WTC11 (cell line): ENCODE measurements at regions of chr3 and their contacts with region 1.

Region 1: DNA sequence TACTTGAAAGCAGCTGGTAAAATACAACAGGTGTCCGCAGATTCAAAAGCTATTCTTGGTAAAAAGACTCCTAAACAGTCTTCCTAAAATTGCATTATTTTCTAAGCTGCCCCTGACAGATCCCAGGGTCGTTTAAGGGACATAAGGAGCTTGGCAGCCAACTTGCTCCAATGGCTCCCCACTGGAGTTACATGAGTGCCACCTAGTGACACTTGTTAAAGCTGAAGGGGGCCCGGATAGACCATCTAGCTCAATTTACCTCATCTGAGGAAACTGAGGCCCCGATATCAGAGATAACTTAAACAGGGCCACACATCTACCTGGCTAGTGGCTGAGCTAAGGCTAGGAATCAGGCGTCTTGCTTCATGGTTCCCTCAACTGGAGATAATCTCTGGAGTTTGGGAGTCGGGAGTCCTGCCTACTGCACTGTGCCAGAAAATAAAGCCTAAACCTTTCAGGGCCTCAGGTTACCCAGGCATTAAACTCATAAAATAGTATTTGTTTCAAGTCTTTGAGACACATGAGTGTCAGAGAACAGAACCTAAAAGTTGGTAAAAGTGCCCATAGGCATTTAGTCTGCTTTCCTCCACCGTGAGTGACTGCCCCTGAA is 6.5 kb upstream of the TBC1D23 start:
- DNase-seq: peak; percentile 67
- ATAC-seq: peak; percentile 98
- H3K4me3 Mint-ChIP-seq: no peak overlapping the region
- H3K27ac Mint-ChIP-seq: no peak overlapping the region
- H3K4me1 Mint-ChIP-seq: peaks cover 2% of the 10 kb centered on the region
- H3K27me3 Mint-ChIP-seq: 0 out of 2 replicates have a peak, but pooled peaks cover 2% of the 10 kb centered on the region
- CTCF ChIP-seq: peak; percentile 40; the same call in 1 of the 2 replicates

Region 2: GRCh38 chr3:99833617-99834205 is 420.6 kb before region 1 on chr3:
- CTCF ChIA-PET with region 1: interaction called, 75 read pairs
- POLR2A ChIA-PET with region 1: no interaction called
- DNase-seq: no peak
- ATAC-seq: no peak
- H3K4me3 Mint-ChIP-seq: no peak overlapping the region
- H3K27ac Mint-ChIP-seq: no peak overlapping the region
- H3K4me1 Mint-ChIP-seq: peaks cover 8% of the 10 kb centered on the region
- H3K27me3 Mint-ChIP-seq: no peaks in the 10 kb centered on the region
- CTCF ChIP-seq: no peak

Region 3: GRCh38 chr3:99842826-99843589 is 411.3 kb before region 1 on chr3:
- CTCF ChIA-PET with region 1: interaction called, 57 read pairs
- POLR2A ChIA-PET with region 1: interaction called, 5 read pairs
- DNase-seq: no peak
- ATAC-seq: peak; percentile 79
- H3K4me3 Mint-ChIP-seq: no peak overlapping the region
- H3K27ac Mint-ChIP-seq: no peak overlapping the region
- H3K4me1 Mint-ChIP-seq: peaks cover 31% of the 10 kb centered on the region
- H3K27me3 Mint-ChIP-seq: no peaks in the 10 kb centered on the region
- CTCF ChIP-seq: 0 out of 2 replicates have a peak, but pooled peaks have one; percentile 36

Region 4: DNA sequence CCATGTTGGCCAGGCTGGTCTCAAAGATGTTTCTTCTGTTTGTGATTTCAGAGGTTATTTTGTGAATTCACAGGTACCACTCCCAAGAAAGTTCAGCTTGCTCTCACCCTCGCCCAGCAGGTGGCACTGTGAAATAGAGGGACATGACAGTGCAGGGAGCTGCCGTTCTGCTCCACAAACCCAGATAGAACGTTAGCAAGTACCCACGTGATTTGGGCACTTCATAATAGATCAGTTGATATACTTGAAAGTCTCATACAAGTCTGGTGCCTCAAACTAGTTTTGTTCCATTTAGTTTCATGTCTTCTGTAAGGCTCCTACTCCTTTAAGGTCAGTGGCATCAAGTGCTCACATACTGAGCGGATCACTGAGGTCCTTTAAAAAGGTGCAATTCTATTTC is 185.4 kb before region 1 on chr3:
- CTCF ChIA-PET with region 1: interaction called, 69 read pairs
- POLR2A ChIA-PET with region 1: interaction called, 5 read pairs
- DNase-seq: peak; percentile 86
- ATAC-seq: peak; percentile 86
- H3K4me3 Mint-ChIP-seq: no peak overlapping the region
- H3K27ac Mint-ChIP-seq: no peak overlapping the region
- H3K4me1 Mint-ChIP-seq: peaks cover 36% of the 10 kb centered on the region
- H3K27me3 Mint-ChIP-seq: no peaks in the 10 kb centered on the region
- CTCF ChIP-seq: peak; percentile 44; the same call in 1 of the 2 replicates

Region 5: DNA sequence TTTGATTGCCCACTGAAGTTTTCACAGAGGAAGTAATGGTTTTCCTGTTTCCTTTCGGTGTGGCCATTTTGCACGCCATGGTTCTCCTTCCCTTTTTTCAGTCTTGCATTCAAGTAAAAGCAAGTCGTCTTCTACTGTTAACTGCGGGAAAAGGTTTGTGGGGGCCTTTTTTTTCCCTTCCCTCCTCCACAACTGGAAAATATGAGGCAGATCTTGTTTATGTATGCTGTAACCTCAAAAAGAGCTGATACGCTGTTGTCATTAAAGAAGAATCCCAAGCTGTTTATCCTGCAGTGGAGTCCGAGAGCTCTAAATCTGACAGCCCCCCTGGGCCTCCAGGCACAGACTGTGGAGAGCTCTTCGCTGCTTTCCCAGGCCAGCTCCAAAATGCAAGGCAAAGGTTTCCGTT is 180.4 kb before region 1 on chr3:
- CTCF ChIA-PET with region 1: interaction called, 69 read pairs
- POLR2A ChIA-PET with region 1: interaction called, 5 read pairs
- DNase-seq: peak; percentile 28
- ATAC-seq: peak; percentile 80
- H3K4me3 Mint-ChIP-seq: peak overlapping the region; percentile 53
- H3K27ac Mint-ChIP-seq: peak overlapping the region; percentile 97
- H3K4me1 Mint-ChIP-seq: peaks cover 50% of the 10 kb centered on the region
- H3K27me3 Mint-ChIP-seq: no peaks in the 10 kb centered on the region
- CTCF ChIP-seq: no peak

Region 6: DNA sequence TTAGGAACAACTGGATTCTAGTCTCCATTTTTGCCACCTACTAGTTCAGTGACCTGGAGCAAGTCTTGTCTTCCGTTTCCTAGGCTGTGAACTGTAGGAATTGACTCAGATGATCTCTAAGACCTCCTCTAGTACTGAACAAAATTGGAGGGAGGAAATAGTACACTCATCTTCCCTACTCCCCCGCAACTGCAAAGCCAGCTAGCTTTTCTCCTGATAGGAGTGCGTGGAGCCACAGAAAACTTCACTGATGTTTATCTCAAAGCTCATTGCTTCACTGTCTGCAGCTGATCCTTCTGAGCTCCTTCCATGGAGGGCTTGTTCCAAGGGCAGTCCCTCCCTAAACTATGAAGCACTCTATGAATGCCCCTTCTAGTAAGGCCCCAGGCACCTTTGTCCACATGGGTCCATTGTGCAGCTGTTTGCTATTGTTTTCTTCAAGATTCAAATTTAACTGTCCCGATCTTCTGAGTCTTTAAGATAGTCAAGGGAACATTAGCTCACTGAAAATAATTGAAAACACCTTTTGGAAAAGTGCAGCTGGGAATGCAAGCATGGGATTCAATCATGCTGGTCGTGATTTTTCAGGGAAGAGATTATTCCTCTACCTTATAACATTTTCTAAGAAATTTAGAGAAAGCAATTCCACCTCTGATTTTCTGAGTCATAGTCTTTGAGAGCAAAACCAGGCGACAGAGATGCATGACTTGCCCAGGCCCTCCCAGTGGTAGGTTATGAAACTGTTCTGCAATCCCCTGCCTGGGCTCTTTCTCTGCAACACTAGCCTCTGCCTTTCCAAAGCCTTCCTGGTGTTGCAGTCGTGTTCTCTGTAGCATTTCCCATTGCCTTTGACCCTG is 164.2 kb before region 1 on chr3:
- CTCF ChIA-PET with region 1: interaction called, 23 read pairs
- POLR2A ChIA-PET with region 1: no interaction called
- DNase-seq: peak; percentile 43
- ATAC-seq: peak; percentile 95
- H3K4me3 Mint-ChIP-seq: no peak overlapping the region
- H3K27ac Mint-ChIP-seq: peak overlapping the region; percentile 36
- H3K4me1 Mint-ChIP-seq: peaks cover 45% of the 10 kb centered on the region
- H3K27me3 Mint-ChIP-seq: no peaks in the 10 kb centered on the region
- CTCF ChIP-seq: no peak; the same call in 1 of the 2 replicates

Region 7: GRCh38 chr3:100184948-100185570 is 69.2 kb before region 1 on chr3:
- CTCF ChIA-PET with region 1: interaction called, 14 read pairs
- POLR2A ChIA-PET with region 1: no interaction called
- DNase-seq: no peak
- ATAC-seq: no peak
- H3K4me3 Mint-ChIP-seq: no peak overlapping the region
- H3K27ac Mint-ChIP-seq: no peak overlapping the region
- H3K4me1 Mint-ChIP-seq: peaks cover 21% of the 10 kb centered on the region
- H3K27me3 Mint-ChIP-seq: no peaks in the 10 kb centered on the region; the same call in 1 of the 2 replicates
- CTCF ChIP-seq: no peak

Region 8: DNA sequence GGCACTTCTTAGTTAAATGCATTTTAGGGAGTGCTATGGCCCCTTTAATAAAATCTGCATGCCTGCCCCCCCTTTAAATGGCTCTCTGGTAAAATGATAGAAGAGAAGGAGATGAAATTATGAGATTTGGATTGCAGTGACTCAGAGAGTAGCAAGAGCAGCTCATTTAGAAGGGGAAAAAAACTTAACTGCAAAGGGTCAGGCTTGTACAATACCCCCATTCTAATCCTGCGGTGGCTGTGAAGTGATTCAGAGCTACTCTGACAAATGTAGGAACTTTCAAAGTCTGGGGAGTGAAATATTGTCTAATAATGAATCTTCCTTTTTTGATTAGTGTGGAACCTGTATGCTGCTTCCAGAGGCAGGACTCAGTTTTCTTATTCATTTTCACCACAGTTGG is 37.6 kb before region 1 on chr3:
- CTCF ChIA-PET with region 1: no interaction called
- POLR2A ChIA-PET with region 1: no interaction called
- DNase-seq: no peak
- ATAC-seq: no peak
- H3K4me3 Mint-ChIP-seq: no peak overlapping the region
- H3K27ac Mint-ChIP-seq: no peak overlapping the region
- H3K4me1 Mint-ChIP-seq: peaks cover 22% of the 10 kb centered on the region
- H3K27me3 Mint-ChIP-seq: peaks cover 11% of the 10 kb centered on the region
- CTCF ChIP-seq: no peak

Region 9: DNA sequence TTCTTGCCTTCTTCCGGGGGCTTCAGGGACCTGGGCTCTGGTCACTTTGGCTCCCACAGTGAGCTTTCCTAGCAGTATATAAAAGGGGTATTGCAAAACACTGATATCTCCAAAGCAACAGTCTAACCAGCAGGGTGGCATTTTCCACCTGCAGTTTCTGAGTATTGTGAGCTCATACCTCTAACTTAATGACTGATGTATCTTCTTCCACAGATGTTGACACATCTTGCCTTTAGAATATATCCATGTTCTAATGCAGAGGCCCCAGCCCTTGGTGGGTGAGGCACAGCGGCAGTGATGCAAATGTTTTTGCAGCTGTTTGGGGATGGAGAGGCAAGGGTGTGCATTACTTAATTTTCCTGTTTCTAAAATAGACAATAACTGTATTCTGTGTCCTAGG is 309.5 kb after region 1 on chr3:
- CTCF ChIA-PET with region 1: no interaction called
- POLR2A ChIA-PET with region 1: no interaction called
- DNase-seq: no peak
- ATAC-seq: no peak
- H3K4me3 Mint-ChIP-seq: no peak overlapping the region
- H3K27ac Mint-ChIP-seq: no peak overlapping the region
- H3K4me1 Mint-ChIP-seq: peaks cover 23% of the 10 kb centered on the region
- H3K27me3 Mint-ChIP-seq: no peaks in the 10 kb centered on the region
- CTCF ChIP-seq: no peak